ENCODE measurements at regions of chr14 and their contacts with region 1.

Region 1: DNA sequence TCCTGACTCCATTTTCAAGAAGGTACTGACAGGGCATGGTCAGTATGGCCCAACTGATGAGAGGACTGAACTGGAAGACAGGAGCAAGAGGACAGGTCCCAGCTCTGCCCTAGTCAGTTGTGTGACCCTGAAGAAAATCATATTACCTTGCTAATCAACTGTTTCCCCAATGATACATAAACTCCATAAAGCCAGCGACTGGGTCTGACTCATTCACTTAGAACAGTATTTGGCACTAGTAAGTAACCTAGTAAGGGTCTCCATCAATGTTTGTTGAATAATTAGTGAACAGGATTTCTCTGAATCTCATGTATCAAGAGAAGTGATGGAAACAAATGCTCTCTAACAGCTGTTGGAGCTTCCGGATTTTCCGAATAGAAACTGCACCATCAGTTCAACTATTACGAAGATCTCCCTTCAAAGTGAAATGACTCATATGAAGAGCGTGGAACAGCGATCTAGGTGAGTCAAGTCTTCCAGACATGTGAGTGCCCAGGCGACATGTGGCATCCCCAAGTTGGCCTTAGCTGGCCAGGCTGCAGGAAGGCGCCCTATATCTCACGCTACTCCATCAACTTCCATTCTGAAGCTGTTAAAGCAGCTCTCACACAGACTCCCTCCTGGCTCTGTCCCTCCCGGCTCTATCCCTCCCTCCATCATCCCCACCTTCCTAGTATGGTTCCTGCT is 94.5 kb downstream of the TTC7B start:
- DNase-seq: no peak
- ATAC-seq: no peak
- H3K4me3 ChIP-seq: no peak overlapping the region
- H3K27ac ChIP-seq: no peak overlapping the region
- H3K4me1 ChIP-seq: peaks cover 0 to 33% (median 3%) of the 10 kb centered on the region in 12 donors
- H3K27me3 ChIP-seq: no peaks in the 10 kb centered on the region
- CTCF ChIP-seq: no peak
- POLR2A ChIP-seq: no peak

Region 2: GRCh38 chr14:90785471-90785870 is 63.7 kb after region 1 on chr14:
- intact Hi-C with region 1: no loop called
- DNase-seq: peak in 3 of 5 donors; percentile 36 to 80 (median 67)
- ATAC-seq: peak in 3 of 4 donors; percentile 70 to 85 (median 78)
- H3K4me3 ChIP-seq: no peak overlapping the region
- H3K27ac ChIP-seq: no peak overlapping the region
- H3K4me1 ChIP-seq: peaks cover 0 to 6% (median 0%) of the 10 kb centered on the region in 12 donors
- H3K27me3 ChIP-seq: no peaks in the 10 kb centered on the region
- CTCF ChIP-seq: peak in 6 of 12 donors; percentile 7 to 35 (median 25)
- POLR2A ChIP-seq: no peak

Region 3: DNA sequence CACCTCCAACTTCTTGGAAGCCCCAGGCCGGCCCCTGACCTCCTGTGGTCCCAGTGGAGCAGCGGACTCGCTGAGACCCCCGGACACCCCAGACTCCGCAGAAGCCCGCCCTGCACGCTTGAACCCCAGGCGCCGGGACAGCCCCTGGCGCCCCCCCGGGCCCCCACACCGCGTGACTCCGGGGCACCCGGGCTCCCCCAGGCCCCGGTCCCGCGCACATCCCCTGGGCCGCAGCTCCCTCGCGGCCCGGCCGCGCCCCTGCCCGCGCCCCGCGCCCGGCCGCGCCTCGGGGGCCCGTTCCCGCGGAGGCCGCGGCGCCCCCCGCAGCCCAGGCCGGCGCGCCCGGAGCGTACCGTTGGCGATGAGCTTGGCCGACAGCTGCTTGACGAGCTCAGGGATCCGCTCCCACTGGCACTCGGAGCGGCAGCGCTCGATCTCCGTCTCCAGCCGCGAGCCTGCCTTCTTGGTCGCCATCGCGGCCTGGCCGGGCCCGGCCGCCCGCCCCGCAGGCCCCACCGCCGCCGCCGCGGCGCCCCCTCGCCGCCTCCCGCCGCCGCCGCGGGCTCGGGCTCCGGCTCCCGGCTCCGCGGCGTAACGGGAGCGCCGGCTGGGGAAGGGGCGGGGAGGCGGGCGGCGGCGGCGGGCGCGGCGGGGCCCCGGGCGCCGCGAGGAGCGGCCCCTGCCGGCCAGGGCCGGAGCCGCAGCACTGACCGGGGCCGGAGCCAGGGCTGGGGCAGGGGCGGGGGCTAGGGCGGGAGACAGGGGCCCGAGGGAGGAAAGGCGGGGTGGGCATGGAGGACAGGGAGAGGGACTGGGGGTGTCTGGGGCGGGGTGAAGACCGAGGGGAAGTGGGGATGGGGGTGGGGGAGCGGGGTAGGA is 94.3 kb after region 1 on chr14 and contains the start of gene TTC7B:
- intact Hi-C with region 1: loop called in 1 of 10 experiments (anchors 5 kb)
- DNase-seq: peak; percentile 50 to 73 (median 57)
- ATAC-seq: peak; percentile 57 to 86 (median 76)
- H3K4me3 ChIP-seq: peak within 1 kb of the TSS; percentile 56 to 97 (median 79)
- H3K27ac ChIP-seq: peak within 1 kb of the TSS in 4 of 12 donors; percentile 59 to 68 (median 60)
- H3K4me1 ChIP-seq: peaks cover 0 to 34% (median 14%) of the 10 kb centered on the region in 12 donors
- H3K27me3 ChIP-seq: no peaks in the 10 kb centered on the region
- CTCF ChIP-seq: peak in 8 of 12 donors; percentile 10 to 45 (median 28)
- POLR2A ChIP-seq: no peak
- total RNA-seq, gene TTC7B: 54.5 to 76.1 (median 67.9) TPM